T-cell (primary cell): ENCODE measurements at regions of chr13 and their contacts with region 1.

Region 1: GRCh38 chr13:48446464-48446863 is 33.6 kb upstream of the LPAR6 start:
- DNase-seq: no peak
- ATAC-seq: no peak
- H3K4me3 ChIP-seq: no peak overlapping the region
- H3K4me3 Mint-ChIP-seq: no peak overlapping the region
- H3K27ac ChIP-seq: no peak overlapping the region
- H3K27ac Mint-ChIP-seq: no peak overlapping the region
- H3K4me1 ChIP-seq: peaks cover 2 to 8% of the 10 kb centered on the region in 2 experiments
- H3K4me1 Mint-ChIP-seq: peaks cover 7 to 43% (median 38%) of the 10 kb centered on the region in 3 donors
- H3K27me3 ChIP-seq: no peaks in the 10 kb centered on the region
- H3K27me3 Mint-ChIP-seq: no peaks in the 10 kb centered on the region

Region 2: DNA sequence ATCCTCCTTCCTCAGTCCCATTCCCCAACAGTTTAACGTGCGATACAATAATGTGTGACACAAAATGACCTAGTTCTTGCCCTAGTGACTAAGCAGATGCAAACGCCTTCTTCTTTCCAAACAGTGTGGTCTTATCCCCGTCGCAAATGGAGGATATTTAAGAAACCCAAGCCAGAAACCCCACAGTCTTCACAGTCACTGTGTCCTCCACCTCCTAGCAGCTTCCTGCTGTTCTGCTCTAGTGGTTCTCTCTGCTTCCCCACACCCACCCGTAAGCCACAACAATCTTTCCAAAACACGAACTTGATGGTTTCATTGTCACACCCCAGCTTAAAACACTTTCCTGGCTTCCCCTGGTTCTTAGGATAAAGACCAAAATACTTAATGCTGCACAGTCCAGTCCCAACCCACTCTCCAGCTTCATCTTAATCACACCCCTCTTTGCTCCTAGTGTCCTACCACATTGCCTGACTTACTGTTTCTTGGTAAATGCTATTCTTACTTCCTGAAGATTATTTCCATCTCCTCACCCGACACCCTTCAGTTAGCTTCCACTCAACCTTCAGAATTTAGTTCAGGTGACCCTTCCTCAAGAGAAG is 181.1 kb before region 1 on chr13:
- CTCF ChIA-PET with region 1: no interaction called
- POLR2A ChIA-PET with region 1: no interaction called
- DNase-seq: peak in 6 of 35 experiments; percentile 2 to 20 (median 6)
- ATAC-seq: peak; percentile 37 to 72 (median 48)
- H3K4me3 ChIP-seq: no peak overlapping the region
- H3K4me3 Mint-ChIP-seq: peak overlapping the region in 1 of 3 donors; percentile 27
- H3K27ac ChIP-seq: peak overlapping the region; percentile 35
- H3K27ac Mint-ChIP-seq: peak overlapping the region; percentile 78 to 82
- H3K4me1 ChIP-seq: peaks cover 11 to 29% of the 10 kb centered on the region in 2 experiments
- H3K4me1 Mint-ChIP-seq: peaks cover 60 to 62% (median 62%) of the 10 kb centered on the region in 3 donors
- H3K27me3 ChIP-seq: no peaks in the 10 kb centered on the region
- H3K27me3 Mint-ChIP-seq: no peaks in the 10 kb centered on the region

Region 3: GRCh38 chr13:48571126-48571913 is 124.9 kb after region 1 on chr13:
- CTCF ChIA-PET with region 1: no interaction called
- POLR2A ChIA-PET with region 1: interaction called in 1 of 2 experiments, 11 read pairs
- DNase-seq: no peak
- ATAC-seq: peak in 2 of 4 experiments; percentile 36 to 44
- H3K4me3 ChIP-seq: no peak overlapping the region
- H3K4me3 Mint-ChIP-seq: no peak overlapping the region
- H3K27ac ChIP-seq: peak overlapping the region; percentile 28
- H3K27ac Mint-ChIP-seq: peak overlapping the region in 1 of 2 donors; percentile 55
- H3K4me1 ChIP-seq: peaks cover 4 to 19% of the 10 kb centered on the region in 2 experiments
- H3K4me1 Mint-ChIP-seq: peaks cover 26 to 43% (median 40%) of the 10 kb centered on the region in 3 donors
- H3K27me3 ChIP-seq: peaks cover 2 to 3% of the 10 kb centered on the region in 2 experiments
- H3K27me3 Mint-ChIP-seq: peaks cover 8 to 14% of the 10 kb centered on the region in 2 donors

Region 4: GRCh38 chr13:49436890-49437289 is 990.4 kb after region 1 on chr13:
- CTCF ChIA-PET with region 1: no interaction called
- POLR2A ChIA-PET with region 1: interaction called in 1 of 2 experiments, 11 read pairs
- DNase-seq: no peak
- ATAC-seq: no peak
- H3K4me3 ChIP-seq: no peak overlapping the region
- H3K4me3 Mint-ChIP-seq: no peak overlapping the region
- H3K27ac ChIP-seq: no peak overlapping the region
- H3K27ac Mint-ChIP-seq: no peak overlapping the region
- H3K4me1 ChIP-seq: no peaks in the 10 kb centered on the region
- H3K4me1 Mint-ChIP-seq: peaks cover 0 to 9% (median under 1%) of the 10 kb centered on the region in 3 donors
- H3K27me3 ChIP-seq: no peaks in the 10 kb centered on the region
- H3K27me3 Mint-ChIP-seq: no peaks in the 10 kb centered on the region

Region 5: GRCh38 chr13:50006426-50007135 is 1560.1 kb after region 1 on chr13:
- CTCF ChIA-PET with region 1: no interaction called
- POLR2A ChIA-PET with region 1: interaction called in 1 of 2 experiments, 13 read pairs
- DNase-seq: no peak
- ATAC-seq: no peak
- H3K4me3 ChIP-seq: no peak overlapping the region
- H3K4me3 Mint-ChIP-seq: no peak overlapping the region
- H3K27ac ChIP-seq: no peak overlapping the region
- H3K27ac Mint-ChIP-seq: peak overlapping the region; percentile 7 to 24
- H3K4me1 ChIP-seq: peaks cover 3 to 21% of the 10 kb centered on the region in 2 experiments
- H3K4me1 Mint-ChIP-seq: peaks cover 37 to 54% (median 49%) of the 10 kb centered on the region in 3 donors
- H3K27me3 ChIP-seq: no peaks in the 10 kb centered on the region
- H3K27me3 Mint-ChIP-seq: no peaks in the 10 kb centered on the region